ENCODE measurements at regions of chrX and their contacts with region 1.

Region 1: DNA sequence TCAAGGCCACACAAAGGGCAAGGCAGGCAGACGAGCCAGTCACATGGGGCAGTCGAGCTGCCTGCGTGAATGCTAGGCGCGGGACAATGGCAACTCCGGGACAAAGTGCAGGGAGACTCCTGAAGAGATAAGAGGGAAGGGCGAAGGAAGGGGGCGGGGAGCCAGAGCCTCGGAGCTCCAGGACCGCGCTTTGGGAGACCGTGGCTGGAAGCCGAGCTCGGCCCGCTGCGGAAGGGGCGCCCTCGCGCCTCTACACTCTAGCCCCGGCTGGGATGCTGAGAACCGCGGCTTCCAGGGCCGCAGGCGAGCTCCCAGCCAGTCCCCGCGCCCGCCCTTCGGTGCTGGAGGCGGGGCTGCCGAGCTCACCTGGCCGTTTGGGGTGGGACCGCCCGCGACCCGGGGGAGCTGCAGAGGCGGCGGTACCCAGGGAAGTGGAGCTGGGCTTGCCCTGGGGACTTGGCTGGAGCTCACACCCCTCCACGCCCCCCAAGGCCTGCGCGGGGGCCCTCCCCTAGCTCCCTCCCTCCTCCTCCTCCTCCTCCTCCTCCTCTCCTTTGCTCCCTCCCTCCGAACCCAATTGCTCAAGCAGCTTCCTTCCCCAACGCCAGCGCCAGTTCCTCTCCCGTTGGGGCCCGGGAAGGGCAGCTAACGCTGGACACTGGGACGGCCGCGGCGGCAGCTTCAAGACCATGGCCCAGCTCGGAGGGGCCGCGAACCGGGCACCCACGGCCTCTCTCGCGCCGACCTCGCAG is at the start of gene SOWAHD:
- DNase-seq: peak; percentile 3
- H3K4me3 Mint-ChIP-seq: peak within 1 kb of the TSS; percentile 77
- H3K27ac Mint-ChIP-seq: peak within 1 kb of the TSS; percentile 94
- H3K4me1 Mint-ChIP-seq: peaks cover 48% of the 10 kb centered on the region
- H3K27me3 Mint-ChIP-seq: no peaks in the 10 kb centered on the region
- total RNA-seq, gene SOWAHD: 0.21 and 0.34 TPM in 2 replicates

Region 2: GRCh38 chrX:119647552-119648420 is 110.4 kb before region 1 on chrX:
- intact Hi-C with region 1: loop called (anchors 1 kb)
- DNase-seq: peak; percentile 62
- H3K4me3 Mint-ChIP-seq: peak overlapping the region; percentile 66
- H3K27ac Mint-ChIP-seq: peak overlapping the region; percentile 91
- H3K4me1 Mint-ChIP-seq: peaks cover 22% of the 10 kb centered on the region
- H3K27me3 Mint-ChIP-seq: no peaks in the 10 kb centered on the region

Region 3: GRCh38 chrX:119685225-119686066 is 72.7 kb before region 1 on chrX:
- intact Hi-C with region 1: loop called (anchors 2 kb)
- DNase-seq: no peak
- H3K4me3 Mint-ChIP-seq: peak overlapping the region; percentile 93
- H3K27ac Mint-ChIP-seq: peak overlapping the region; percentile 94
- H3K4me1 Mint-ChIP-seq: peaks cover 65% of the 10 kb centered on the region
- H3K27me3 Mint-ChIP-seq: no peaks in the 10 kb centered on the region

Region 4: GRCh38 chrX:119693040-119693995 is 64.8 kb before region 1 on chrX and contains the start of gene SEPTIN6:
- intact Hi-C with region 1: loop called (anchors 1 kb)
- DNase-seq: peak; percentile 78
- H3K4me3 Mint-ChIP-seq: peak within 1 kb of the TSS; percentile 93
- H3K27ac Mint-ChIP-seq: peak within 1 kb of the TSS; percentile 94
- H3K4me1 Mint-ChIP-seq: peaks cover 6% of the 10 kb centered on the region
- H3K27me3 Mint-ChIP-seq: peaks cover 2% of the 10 kb centered on the region
- total RNA-seq, gene SEPTIN6: 159 and 172 TPM in 2 replicates

Region 5: GRCh38 chrX:119729408-119730201 is 28.6 kb before region 1 on chrX:
- intact Hi-C with region 1: no loop called
- DNase-seq: peak; percentile 28
- H3K4me3 Mint-ChIP-seq: no peak overlapping the region
- H3K27ac Mint-ChIP-seq: no peak overlapping the region
- H3K4me1 Mint-ChIP-seq: peaks cover 6% of the 10 kb centered on the region
- H3K27me3 Mint-ChIP-seq: peaks cover 2% of the 10 kb centered on the region

Region 6: GRCh38 chrX:119791438-119792231 is 33.5 kb after region 1 on chrX and contains the start of gene RPL39:
- intact Hi-C with region 1: loop called (anchors 2 kb)
- DNase-seq: peak; percentile 75
- H3K4me3 Mint-ChIP-seq: peak within 1 kb of the TSS; percentile 96
- H3K27ac Mint-ChIP-seq: peak within 1 kb of the TSS; percentile 95
- H3K4me1 Mint-ChIP-seq: peaks cover 10% of the 10 kb centered on the region
- H3K27me3 Mint-ChIP-seq: no peaks in the 10 kb centered on the region
- total RNA-seq, gene RPL39: 1,853 and 1,912 TPM in 2 replicates

Region 7: DNA sequence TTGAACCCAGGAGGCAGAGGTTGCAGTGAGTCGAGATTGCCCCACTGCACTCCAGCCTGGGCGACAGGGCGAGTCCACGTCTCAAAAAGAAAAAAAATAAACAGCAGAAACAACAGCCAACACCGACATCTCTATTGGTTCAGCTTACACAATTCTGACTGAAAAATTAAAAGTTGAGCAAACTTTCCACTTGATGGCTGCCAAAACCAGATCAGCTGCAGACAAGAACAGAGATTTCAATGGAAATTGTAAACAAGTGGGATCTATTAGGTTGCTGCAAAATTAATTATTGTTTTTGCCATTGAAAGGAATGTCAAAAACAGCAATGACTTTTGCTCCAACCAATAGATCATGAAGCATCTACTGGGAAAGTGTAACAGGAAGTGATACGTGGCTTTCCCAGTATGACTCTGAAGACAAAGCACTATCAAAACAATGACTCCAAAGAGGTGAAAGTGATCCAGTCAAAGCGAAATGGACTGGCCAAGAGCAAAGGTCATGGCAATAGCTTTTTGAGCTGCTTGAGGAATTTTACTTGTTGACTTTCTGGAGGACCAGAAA is 68.3 kb after region 1 on chrX:
- intact Hi-C with region 1: loop called (anchors 2 kb)
- DNase-seq: peak; percentile 0
- H3K4me3 Mint-ChIP-seq: no peak overlapping the region
- H3K27ac Mint-ChIP-seq: no peak overlapping the region
- H3K4me1 Mint-ChIP-seq: peaks cover 10% of the 10 kb centered on the region
- H3K27me3 Mint-ChIP-seq: no peaks in the 10 kb centered on the region

Region 8: GRCh38 chrX:119852382-119853353 is 94.5 kb after region 1 on chrX and contains the start of gene UPF3B:
- intact Hi-C with region 1: loop called (anchors 1 kb)
- DNase-seq: peak; percentile 90
- H3K4me3 Mint-ChIP-seq: peak within 1 kb of the TSS; percentile 94
- H3K27ac Mint-ChIP-seq: peak within 1 kb of the TSS; percentile 97
- H3K4me1 Mint-ChIP-seq: peaks cover 8% of the 10 kb centered on the region
- H3K27me3 Mint-ChIP-seq: no peaks in the 10 kb centered on the region
- total RNA-seq, gene UPF3B: 11.0 and 13.0 TPM in 2 replicates

Region 9: GRCh38 chrX:119991005-119991771 is 233.0 kb after region 1 on chrX:
- intact Hi-C with region 1: no loop called
- DNase-seq: no peak
- H3K4me3 Mint-ChIP-seq: peak overlapping the region; percentile 79
- H3K27ac Mint-ChIP-seq: no peak overlapping the region
- H3K4me1 Mint-ChIP-seq: peaks cover 11% of the 10 kb centered on the region
- H3K27me3 Mint-ChIP-seq: peaks cover 42% of the 10 kb centered on the region

Region 10: GRCh38 chrX:120281761-120282160 is 523.6 kb after region 1 on chrX:
- intact Hi-C with region 1: no loop called
- DNase-seq: no peak
- H3K4me3 Mint-ChIP-seq: no peak overlapping the region
- H3K27ac Mint-ChIP-seq: no peak overlapping the region
- H3K4me1 Mint-ChIP-seq: no peaks in the 10 kb centered on the region
- H3K27me3 Mint-ChIP-seq: peaks cover 11% of the 10 kb centered on the region